ENCODE measurements at regions of chr1 and their contacts with region 1.

Region 1: DNA sequence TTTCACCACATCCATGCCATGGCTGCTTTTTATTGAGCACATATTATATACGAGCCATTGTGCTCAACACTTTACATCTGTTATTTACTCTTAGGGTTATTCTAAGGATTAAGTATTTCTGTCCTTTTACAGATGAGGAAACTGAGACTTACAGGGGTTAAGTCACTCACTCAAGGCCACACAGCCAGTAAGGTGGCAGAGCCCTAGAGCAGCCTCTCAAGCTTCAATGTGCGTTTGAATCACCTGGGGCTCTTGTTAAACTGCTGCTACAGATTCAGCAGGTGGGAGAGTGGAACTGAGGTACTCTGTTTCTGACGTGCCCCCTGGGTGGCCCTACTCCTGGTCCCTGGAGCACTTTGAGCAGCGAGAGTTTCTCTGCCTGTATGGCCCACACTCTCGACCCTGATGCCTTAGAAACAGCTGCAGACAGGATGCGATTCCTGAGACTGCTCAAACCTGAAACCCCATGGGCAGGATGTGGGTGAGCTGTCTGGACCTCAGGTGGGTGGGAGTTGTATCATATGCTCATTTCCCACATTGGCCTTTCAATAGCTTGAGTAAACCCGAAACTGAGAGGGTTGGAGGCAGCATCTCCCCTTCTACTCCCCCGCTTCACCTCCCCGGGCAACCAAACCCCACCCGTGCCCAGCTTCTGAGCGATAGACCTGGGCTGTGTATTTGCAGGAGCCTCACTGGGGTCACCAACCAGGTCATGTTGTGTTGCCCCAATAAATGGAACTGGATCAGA is 59.3 kb downstream of the MAN1C1 start:
- DNase-seq: peak; percentile 98
- ATAC-seq: peak; percentile 87
- H3K4me3 Mint-ChIP-seq: peak overlapping the region; percentile 43
- H3K27ac Mint-ChIP-seq: peak overlapping the region; percentile 74
- H3K4me1 Mint-ChIP-seq: peaks cover 78% of the 10 kb centered on the region
- H3K27me3 Mint-ChIP-seq: peaks cover 15% of the 10 kb centered on the region
- CTCF ChIP-seq: no peak

Region 2: DNA sequence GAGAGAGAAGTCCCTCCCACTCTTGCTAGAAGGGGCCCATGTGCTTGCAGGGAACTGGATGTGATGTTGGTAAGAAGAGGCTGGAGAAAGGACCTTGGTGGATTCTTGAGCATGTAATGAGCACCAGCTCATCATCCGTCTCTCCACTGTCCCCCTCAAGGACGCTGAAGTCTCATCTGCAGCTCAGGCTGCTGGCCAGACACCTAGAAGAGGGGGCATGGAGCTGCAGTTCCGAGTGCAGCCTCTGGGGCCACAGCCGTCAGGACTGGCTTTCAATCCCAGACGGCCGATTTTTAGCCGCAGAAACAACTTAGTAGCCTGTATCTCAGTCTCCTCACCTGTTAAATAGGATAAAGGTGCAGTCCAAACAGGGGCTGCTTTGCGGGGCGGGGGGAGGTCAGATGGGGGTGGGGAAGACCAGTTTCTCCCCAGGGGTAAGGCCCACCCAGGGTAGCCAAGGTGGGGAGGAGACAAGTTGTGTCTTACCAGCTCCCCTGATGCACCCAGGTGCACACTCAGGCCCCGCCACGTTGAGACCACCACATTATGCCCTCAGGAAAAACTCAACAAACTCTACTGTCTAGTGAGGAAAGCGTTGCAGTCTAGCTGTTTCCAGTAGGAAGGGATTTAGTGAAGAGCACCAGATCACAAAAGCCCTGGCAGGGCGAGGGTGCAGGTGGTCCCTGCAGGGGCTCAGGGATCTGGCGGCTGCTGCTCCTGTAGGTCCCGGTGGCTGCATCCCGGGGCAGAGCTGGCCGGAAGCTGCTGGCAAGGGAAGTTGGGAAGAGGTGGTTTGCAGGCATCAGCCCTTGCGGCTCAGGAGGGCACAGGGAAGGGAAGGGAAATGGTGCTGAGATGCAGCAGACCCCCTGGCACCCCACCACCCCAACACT is 102.9 kb before region 1 on chr1:
- CTCF ChIA-PET with region 1: no interaction called
- POLR2A ChIA-PET with region 1: no interaction called
- intact Hi-C with region 1: no loop called
- DNase-seq: peak; percentile 78
- ATAC-seq: peak; percentile 79
- H3K4me3 Mint-ChIP-seq: no peak overlapping the region
- H3K27ac Mint-ChIP-seq: no peak overlapping the region
- H3K4me1 Mint-ChIP-seq: peaks cover 48% of the 10 kb centered on the region
- H3K27me3 Mint-ChIP-seq: no peaks in the 10 kb centered on the region
- CTCF ChIP-seq: peak; percentile 82

Region 3: DNA sequence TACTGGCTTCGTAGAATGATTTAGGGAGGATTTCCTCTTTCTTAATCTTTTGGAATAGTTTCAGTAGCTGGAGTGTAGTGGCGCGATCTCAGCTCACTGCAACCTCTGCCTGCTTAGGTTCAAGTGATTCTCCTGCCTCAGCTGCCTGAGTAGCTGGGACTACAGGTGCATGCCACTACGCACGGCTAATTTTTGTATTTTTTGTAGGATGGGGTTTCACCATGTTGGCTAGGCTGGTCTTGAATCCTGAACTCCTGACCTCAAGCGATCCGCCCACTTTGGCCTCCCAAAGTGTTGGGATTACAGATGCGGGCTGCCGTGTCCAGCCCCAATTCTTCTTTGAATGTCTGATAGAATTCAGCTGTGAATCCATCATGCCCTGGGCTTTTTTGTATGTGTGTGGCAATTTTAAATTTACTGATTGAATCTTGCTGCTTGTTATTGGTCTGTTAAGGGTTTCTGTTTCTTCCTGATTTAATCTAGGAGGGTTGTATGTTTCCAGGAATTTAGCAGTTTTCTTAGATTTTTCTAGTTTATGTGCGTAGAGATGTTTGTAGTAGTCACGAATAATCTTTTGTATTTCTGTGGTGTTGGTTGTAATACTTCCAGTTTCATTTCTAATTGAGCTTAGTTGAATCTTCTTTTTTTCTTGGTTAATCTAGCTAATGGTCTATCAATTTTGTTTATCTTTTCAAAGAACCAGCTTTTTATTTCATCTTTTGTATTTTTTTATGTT is 44.0 kb before region 1 on chr1:
- CTCF ChIA-PET with region 1: interaction called, 9 read pairs
- POLR2A ChIA-PET with region 1: interaction called, 12 read pairs
- intact Hi-C with region 1: no loop called
- DNase-seq: peak; percentile 27
- ATAC-seq: peak; percentile 71
- H3K4me3 Mint-ChIP-seq: peak overlapping the region; percentile 77
- H3K27ac Mint-ChIP-seq: peak overlapping the region; percentile 87
- H3K4me1 Mint-ChIP-seq: peaks cover 64% of the 10 kb centered on the region
- H3K27me3 Mint-ChIP-seq: no peaks in the 10 kb centered on the region
- CTCF ChIP-seq: no peak

Region 4: DNA sequence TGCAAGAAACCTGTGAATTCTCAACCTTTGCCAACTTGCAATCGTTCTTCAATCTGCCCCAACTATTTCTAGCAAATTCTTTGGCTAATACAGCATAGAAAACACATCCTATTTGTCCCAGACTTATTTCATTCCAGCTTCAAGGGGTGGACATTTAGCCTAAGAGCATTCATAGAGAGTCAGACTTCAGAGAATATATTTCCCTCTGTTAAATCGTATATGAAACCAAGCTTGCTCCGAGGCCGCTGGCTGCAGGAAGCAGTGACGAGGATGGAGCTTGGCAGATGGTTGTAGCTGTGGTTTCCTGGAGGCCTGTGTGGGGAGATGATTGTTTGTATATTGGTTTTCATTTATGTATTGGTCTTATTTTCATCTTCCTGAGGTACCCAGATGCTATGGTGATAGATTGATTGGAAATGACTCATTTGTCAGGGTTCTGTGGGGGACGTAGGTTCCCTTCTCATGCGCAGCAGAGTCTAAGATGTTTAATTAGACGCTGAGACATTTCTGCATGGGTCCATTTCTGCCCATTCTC is 33.3 kb before region 1 on chr1:
- CTCF ChIA-PET with region 1: interaction called, 6 read pairs
- POLR2A ChIA-PET with region 1: interaction called, 10 read pairs
- intact Hi-C with region 1: loop called (anchors 1 kb)
- DNase-seq: peak; percentile 90
- ATAC-seq: peak; percentile 91
- H3K4me3 Mint-ChIP-seq: peak overlapping the region; percentile 40
- H3K27ac Mint-ChIP-seq: peak overlapping the region; percentile 62
- H3K4me1 Mint-ChIP-seq: peaks cover 57% of the 10 kb centered on the region
- H3K27me3 Mint-ChIP-seq: peaks cover 8% of the 10 kb centered on the region
- CTCF ChIP-seq: no peak

Region 5: GRCh38 chr1:25771246-25772114 is 95.6 kb after region 1 on chr1:
- CTCF ChIA-PET with region 1: no interaction called
- POLR2A ChIA-PET with region 1: interaction called, 6 read pairs
- intact Hi-C with region 1: loop called (anchors 5 kb)
- DNase-seq: peak; percentile 55
- ATAC-seq: peak; percentile 22
- H3K4me3 Mint-ChIP-seq: no peak overlapping the region
- H3K27ac Mint-ChIP-seq: peak overlapping the region; percentile 15
- H3K4me1 Mint-ChIP-seq: peaks cover 80% of the 10 kb centered on the region
- H3K27me3 Mint-ChIP-seq: no peaks in the 10 kb centered on the region
- CTCF ChIP-seq: no peak

Region 6: GRCh38 chr1:25796811-25797458 is 121.0 kb after region 1 on chr1:
- CTCF ChIA-PET with region 1: interaction called, 7 read pairs
- POLR2A ChIA-PET with region 1: interaction called, 4 read pairs
- intact Hi-C with region 1: loop called (anchors 5 kb)
- DNase-seq: peak; percentile 92
- ATAC-seq: peak; percentile 57
- H3K4me3 Mint-ChIP-seq: peak overlapping the region; percentile 45
- H3K27ac Mint-ChIP-seq: peak overlapping the region; percentile 78
- H3K4me1 Mint-ChIP-seq: peaks cover 44% of the 10 kb centered on the region
- H3K27me3 Mint-ChIP-seq: no peaks in the 10 kb centered on the region
- CTCF ChIP-seq: peak; percentile 81